Heart left ventricle (tissue), 16 donors: ENCODE measurements at regions of chr20 and their contacts with region 1.

Region 1: DNA sequence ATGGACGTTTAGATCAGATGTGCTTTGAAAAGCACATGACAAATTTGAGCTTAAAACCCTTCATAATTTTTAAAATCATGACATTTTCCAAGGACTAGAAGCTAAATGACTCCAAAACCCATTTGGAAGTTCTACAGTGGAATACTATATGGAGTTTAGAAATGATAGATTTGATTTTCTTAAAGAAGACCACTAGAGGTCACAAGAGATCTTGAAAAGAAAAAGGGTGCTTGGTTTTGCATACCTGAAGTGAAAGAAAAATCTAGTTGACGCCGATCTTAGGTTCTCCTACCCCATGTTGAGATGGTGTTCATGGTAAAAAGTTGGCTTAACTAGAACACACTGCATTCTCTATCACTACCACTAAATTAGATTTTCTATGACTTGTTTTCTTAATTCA is 31.5 kb downstream of the CFAP61 start:
- DNase-seq: no peak
- ATAC-seq: peak in 3 of 4 donors; percentile 7 to 31 (median 29)
- H3K4me3 ChIP-seq: peak overlapping the region in 1 of 12 donors; percentile 11
- H3K27ac ChIP-seq: peak overlapping the region in 11 of 12 donors; percentile 70 to 98 (median 86)
- H3K4me1 ChIP-seq: peaks cover 0 to 12% (median 5%) of the 10 kb centered on the region in 12 donors
- H3K27me3 ChIP-seq: peaks cover 0 to 4% (median 0%) of the 10 kb centered on the region in 9 donors
- CTCF ChIP-seq: peak; percentile 26 to 67 (median 52)
- POLR2A ChIP-seq: no peak

Region 2: DNA sequence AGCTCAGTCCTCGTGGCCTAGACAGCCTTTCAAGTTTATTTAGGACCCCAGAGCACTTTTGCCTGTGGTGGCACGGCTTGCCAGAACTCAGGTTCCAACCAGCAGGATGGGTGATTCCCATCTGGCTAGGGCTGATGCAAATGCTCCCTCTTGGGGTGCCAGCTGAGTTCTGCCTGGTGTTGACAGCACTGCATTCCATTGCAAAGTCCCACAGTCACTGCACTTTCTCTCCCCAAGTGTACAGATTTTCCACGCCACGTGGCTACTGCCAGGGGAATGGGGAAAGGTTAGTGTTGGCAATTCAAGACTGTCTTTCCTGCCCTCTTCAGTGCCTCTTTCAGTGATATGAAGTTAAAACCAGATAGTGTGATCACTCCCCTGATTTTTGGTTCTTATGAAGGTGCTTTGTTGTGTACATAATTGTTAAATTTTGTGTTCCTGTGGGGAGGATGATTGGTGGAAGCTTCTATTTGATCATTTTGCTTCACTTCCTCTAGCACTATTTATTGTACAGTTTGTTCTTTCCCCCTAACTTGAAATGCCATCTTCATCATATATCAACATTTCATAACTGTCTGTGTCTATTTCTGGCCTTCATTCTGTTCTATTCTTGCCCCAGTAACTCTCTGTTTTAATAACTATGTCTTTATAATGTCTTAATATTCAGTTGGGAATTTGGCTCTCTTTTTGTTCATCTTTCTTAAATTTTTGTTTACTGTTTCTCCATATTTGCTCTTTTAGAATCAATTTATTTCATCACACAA is 54.7 kb after region 1 on chr20:
- intact Hi-C with region 1: loop called in 4 of 10 experiments (anchors 2 to 5 kb)
- DNase-seq: peak in 4 of 5 donors; percentile 38 to 81 (median 56)
- ATAC-seq: peak; percentile 93 to 96 (median 94)
- H3K4me3 ChIP-seq: no peak overlapping the region
- H3K27ac ChIP-seq: peak overlapping the region; percentile 37 to 82 (median 68)
- H3K4me1 ChIP-seq: peaks cover 0 to 21% (median 0%) of the 10 kb centered on the region in 12 donors
- H3K27me3 ChIP-seq: no peaks in the 10 kb centered on the region
- CTCF ChIP-seq: no peak
- POLR2A ChIP-seq: peak in 1 of 2 donors; percentile 33

Region 3: GRCh38 chr20:20215976-20216727 is 132.3 kb after region 1 on chr20:
- intact Hi-C with region 1: loop called in 4 of 10 experiments (anchors 1 to 5 kb)
- DNase-seq: peak in 4 of 5 donors; percentile 53 to 80 (median 70)
- ATAC-seq: peak; percentile 75 to 89 (median 84)
- H3K4me3 ChIP-seq: peak overlapping the region in 4 of 12 donors; percentile 2 to 30 (median 20)
- H3K27ac ChIP-seq: peak overlapping the region; percentile 19 to 90 (median 74)
- H3K4me1 ChIP-seq: peaks cover 0 to 38% (median 13%) of the 10 kb centered on the region in 12 donors
- H3K27me3 ChIP-seq: no peaks in the 10 kb centered on the region
- CTCF ChIP-seq: no peak
- POLR2A ChIP-seq: no peak

Region 4: GRCh38 chr20:20237093-20237959 is 153.5 kb after region 1 on chr20:
- intact Hi-C with region 1: loop called (anchors 1 to 5 kb)
- DNase-seq: peak in 2 of 5 donors; percentile 32
- ATAC-seq: peak; percentile 25 to 81 (median 76)
- H3K4me3 ChIP-seq: no peak overlapping the region
- H3K27ac ChIP-seq: peak overlapping the region in 1 of 12 donors; percentile 14
- H3K4me1 ChIP-seq: peaks cover 0 to 9% (median 0%) of the 10 kb centered on the region in 12 donors
- H3K27me3 ChIP-seq: peaks cover 0 to 4% (median 0%) of the 10 kb centered on the region in 9 donors
- CTCF ChIP-seq: peak; percentile 55 to 77 (median 65)
- POLR2A ChIP-seq: no peak

Region 5: GRCh38 chr20:20452254-20452676 is 368.5 kb after region 1 on chr20:
- intact Hi-C with region 1: loop called in 1 of 10 experiments (anchors 10 kb)
- DNase-seq: peak; percentile 29 to 83 (median 59)
- ATAC-seq: peak; percentile 13 to 69 (median 50)
- H3K4me3 ChIP-seq: peak overlapping the region in 5 of 12 donors; percentile 2 to 38 (median 5)
- H3K27ac ChIP-seq: peak overlapping the region in 1 of 12 donors; percentile 30
- H3K4me1 ChIP-seq: peaks cover 0 to 53% (median 22%) of the 10 kb centered on the region in 12 donors
- H3K27me3 ChIP-seq: no peaks in the 10 kb centered on the region
- CTCF ChIP-seq: peak in 1 of 12 donors; percentile 11
- POLR2A ChIP-seq: no peak

Region 6: GRCh38 chr20:20568604-20569205 is 484.9 kb after region 1 on chr20:
- intact Hi-C with region 1: loop called in 8 of 10 experiments (anchors 2 to 5 kb)
- DNase-seq: no peak
- ATAC-seq: no peak
- H3K4me3 ChIP-seq: no peak overlapping the region
- H3K27ac ChIP-seq: no peak overlapping the region
- H3K4me1 ChIP-seq: no peaks in the 10 kb centered on the region
- H3K27me3 ChIP-seq: no peaks in the 10 kb centered on the region
- CTCF ChIP-seq: peak; percentile 40 to 75 (median 64)
- POLR2A ChIP-seq: no peak

Region 7: GRCh38 chr20:20582734-20583133 is 498.9 kb after region 1 on chr20:
- intact Hi-C with region 1: no loop called
- DNase-seq: no peak
- ATAC-seq: no peak
- H3K4me3 ChIP-seq: no peak overlapping the region
- H3K27ac ChIP-seq: no peak overlapping the region
- H3K4me1 ChIP-seq: no peaks in the 10 kb centered on the region
- H3K27me3 ChIP-seq: no peaks in the 10 kb centered on the region
- CTCF ChIP-seq: no peak
- POLR2A ChIP-seq: no peak